Posterior vena cava (tissue), 2 donors: ENCODE measurements at regions of chr2 and their contacts with region 1.

Region 1: GRCh38 chr2:234536178-234536965 is 39.5 kb upstream of the ARL4C start:
- DNase-seq: no peak

Region 2: GRCh38 chr2:234459401-234460009 is 76.9 kb before region 1 on chr2:
- intact Hi-C with region 1: no loop called
- DNase-seq: no peak

Region 3: GRCh38 chr2:234517971-234518370 is 18.4 kb before region 1 on chr2:
- intact Hi-C with region 1: loop called in 1 of 2 experiments (anchors 1 kb)
- DNase-seq: no peak

Region 4: GRCh38 chr2:234661175-234661574 is 124.8 kb after region 1 on chr2:
- intact Hi-C with region 1: no loop called
- DNase-seq: no peak